ENCODE measurements at regions of chr2 and their contacts with region 1.

Region 1: DNA sequence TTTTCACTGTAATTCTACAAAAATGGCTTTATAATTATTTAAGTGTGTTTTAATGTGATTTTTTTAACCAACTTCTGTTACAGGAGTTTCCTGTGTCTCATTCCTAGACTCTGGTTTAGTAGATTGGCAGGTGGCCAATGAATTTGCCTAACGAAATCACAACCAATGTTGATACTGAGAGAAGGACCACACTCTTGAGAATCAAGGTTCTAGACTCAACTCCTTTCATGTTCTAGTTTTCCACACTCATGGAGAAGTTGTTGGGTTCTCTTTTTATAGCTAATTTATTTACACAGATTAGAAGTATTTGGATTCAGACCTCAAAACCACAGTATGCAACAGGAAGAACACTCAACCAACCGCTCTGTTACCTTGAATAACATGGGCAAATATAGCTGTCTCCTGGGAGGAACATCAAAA is 22.6 kb upstream of the USP34 start:
- DNase-seq: peak; percentile 42
- ATAC-seq: peak; percentile 85
- H3K4me3 Mint-ChIP-seq: no peak overlapping the region
- H3K27ac Mint-ChIP-seq: peak overlapping the region; percentile 72
- H3K4me1 Mint-ChIP-seq: peaks cover 19% of the 10 kb centered on the region
- H3K27me3 Mint-ChIP-seq: no peaks in the 10 kb centered on the region

Region 2: DNA sequence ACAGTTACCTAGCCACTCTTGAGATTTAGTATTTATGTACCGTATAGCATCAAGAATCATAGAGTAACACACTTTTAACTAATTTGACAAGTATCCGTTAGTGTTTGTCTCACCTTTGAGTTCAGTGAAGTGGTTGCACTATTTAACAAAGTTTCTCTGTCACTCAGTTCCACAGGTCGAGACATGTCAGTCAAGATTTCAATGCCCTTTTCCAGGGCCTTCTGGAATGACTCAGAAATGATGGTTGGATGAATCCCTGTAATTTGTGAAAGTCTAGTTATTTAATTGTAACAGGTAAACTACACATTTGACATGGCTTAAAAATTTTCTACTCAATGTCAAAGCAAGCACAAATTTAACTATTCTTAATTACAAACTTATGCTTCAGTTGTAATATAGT is 385.2 kb after region 1 on chr2:
- CTCF ChIA-PET with region 1: no interaction called
- POLR2A ChIA-PET with region 1: no interaction called
- intact Hi-C with region 1: loop called in 1 of 2 experiments (anchors 5 kb)
- DNase-seq: no peak
- ATAC-seq: no peak
- H3K4me3 Mint-ChIP-seq: no peak overlapping the region
- H3K27ac Mint-ChIP-seq: no peak overlapping the region
- H3K4me1 Mint-ChIP-seq: peaks cover 2% of the 10 kb centered on the region
- H3K27me3 Mint-ChIP-seq: no peaks in the 10 kb centered on the region

Measured in activated CD4-positive, alpha-beta T cell treated with anti-CD3 and anti-CD28 coated beads for 36 hours (primary cell).